GM13977 (cell line): ENCODE measurements at regions of chr18 and their contacts with region 1.

Region 1: DNA sequence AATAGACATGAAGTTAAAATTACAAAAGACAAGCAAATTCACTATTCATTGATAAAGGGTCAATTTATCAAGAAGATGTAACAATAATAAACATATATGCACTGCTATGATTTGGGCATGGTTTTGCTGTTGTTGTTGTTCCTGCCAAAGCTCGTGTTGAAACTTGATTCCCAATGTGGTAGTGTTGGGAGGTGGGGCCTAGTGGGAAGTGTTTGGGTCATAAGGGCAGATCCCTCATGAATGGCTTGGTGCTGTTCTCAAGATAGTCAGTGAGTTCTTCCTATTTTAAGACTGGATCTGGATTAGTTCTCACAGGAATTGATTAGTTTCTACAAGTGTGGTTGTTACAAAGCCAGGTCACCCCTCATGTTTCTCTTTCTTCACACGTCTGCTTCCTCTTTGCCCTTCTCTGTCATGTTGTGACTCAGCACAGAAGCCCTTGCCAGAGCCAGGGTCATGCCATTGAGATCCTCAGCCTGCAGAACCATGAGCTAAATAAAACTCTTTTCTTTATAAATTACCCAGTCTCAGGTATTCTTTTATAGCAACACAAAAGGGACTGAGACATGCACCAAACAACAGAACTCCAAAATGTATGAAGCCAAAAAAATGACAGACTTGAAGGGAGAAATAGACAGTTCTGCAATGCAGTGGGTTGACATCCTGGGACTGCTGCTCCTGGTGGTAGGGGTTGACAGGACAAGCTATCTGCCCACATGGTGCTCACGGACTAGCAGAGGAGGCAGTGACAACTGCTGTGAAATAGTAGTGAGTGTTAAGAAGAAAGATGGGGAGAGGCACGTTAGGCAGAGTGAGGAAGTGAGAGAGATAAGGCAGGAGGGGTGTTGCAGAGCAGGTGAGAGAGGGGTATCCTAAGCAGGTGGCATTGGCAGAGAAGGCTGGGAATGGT is 18.6 kb upstream of the SKA1 start:
- DNase-seq: peak; percentile 29
- CTCF ChIP-seq: peak; percentile 44

Region 2: DNA sequence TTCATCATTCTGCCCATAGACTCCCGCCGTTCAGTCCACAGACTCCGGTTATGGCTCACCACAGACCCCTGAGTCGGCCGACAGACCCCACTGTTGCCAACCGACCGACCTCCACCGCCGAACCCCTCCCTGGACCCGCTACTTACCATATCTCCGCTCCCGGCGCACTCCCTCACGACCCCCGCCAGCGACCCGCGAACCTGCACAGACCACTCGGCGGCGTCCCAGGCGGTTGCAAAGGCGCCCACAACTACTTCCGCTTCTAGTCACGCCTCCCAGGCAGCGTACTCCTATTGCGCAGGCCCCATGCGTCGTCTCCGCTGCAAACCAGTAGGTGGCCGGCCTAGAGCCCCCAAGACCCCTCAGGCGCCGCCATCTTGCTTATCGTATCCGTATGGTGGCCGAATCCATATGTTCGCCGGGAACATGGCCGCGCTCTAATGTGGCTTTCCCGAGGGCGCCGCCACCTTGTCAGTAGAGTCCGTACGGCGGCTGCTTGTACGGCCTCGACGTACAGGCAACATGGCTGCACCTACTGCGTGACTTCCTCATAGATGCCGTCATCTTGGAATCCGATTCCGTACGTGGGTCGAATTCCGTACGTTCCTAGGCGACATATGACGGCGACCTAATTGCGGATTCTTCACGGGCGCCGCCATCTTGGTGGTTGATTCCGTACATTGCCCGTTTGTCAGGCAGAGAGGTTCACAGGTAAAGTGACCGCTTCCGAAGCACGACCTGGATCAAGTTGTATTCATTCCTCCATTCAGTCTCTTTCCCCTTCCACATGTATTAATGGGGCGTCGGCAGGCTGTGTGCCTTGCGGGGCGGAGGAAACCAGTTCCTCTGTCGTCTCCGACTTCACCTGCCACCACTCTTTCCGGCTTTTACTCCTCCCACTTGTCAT is 68.6 kb before region 1 on chr18 and contains the start of gene CXXC1:
- in situ Hi-C with region 1: loop called (anchors 10 kb)
- DNase-seq: peak; percentile 93
- CTCF ChIP-seq: peak; percentile 49